Activated B cell treated with CpG ODN at 0.5 μM for 24 hours (primary cell): ENCODE measurements at regions of chr3 and their contacts with region 1.

Region 1: DNA sequence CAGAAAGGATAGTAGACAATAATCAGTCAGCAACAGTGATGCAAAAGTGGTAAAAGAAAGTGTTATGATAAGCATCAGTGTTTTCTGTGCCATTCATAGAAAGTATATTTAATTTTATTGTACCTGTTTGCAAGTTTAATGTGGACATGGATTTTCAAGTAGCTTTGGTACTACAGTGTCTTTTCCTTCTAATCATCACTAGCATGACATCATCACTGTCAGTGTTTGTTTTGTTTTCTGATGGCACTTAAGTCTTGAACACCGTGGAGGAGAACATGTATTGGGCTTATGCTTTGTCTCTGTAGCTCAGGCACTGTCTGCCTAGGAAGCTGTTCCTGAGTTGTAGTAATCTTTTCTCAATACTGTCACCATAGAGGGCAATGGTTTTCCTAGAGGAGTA is 41.9 kb downstream of the SETD5 start:
- DNase-seq: no peak
- ATAC-seq: no peak
- H3K4me3 Mint-ChIP-seq: no peak overlapping the region
- H3K27ac Mint-ChIP-seq: no peak overlapping the region
- H3K4me1 Mint-ChIP-seq: peaks cover 2% of the 10 kb centered on the region
- H3K27me3 Mint-ChIP-seq: no peaks in the 10 kb centered on the region
- CTCF ChIP-seq: no peak

Region 2: GRCh38 chr3:9452417-9452816 is 13.1 kb after region 1 on chr3:
- CTCF ChIA-PET with region 1: interaction called, 3 read pairs
- POLR2A ChIA-PET with region 1: no interaction called
- intact Hi-C with region 1: loop called (anchors 2 kb)
- DNase-seq: no peak
- ATAC-seq: no peak
- H3K4me3 Mint-ChIP-seq: no peak overlapping the region
- H3K27ac Mint-ChIP-seq: peak overlapping the region; percentile 32
- H3K4me1 Mint-ChIP-seq: peaks cover 7% of the 10 kb centered on the region
- H3K27me3 Mint-ChIP-seq: no peaks in the 10 kb centered on the region
- CTCF ChIP-seq: no peak

Region 3: GRCh38 chr3:9473496-9474065 is 34.2 kb after region 1 on chr3:
- CTCF ChIA-PET with region 1: no interaction called
- POLR2A ChIA-PET with region 1: no interaction called
- intact Hi-C with region 1: loop called (anchors 5 kb)
- DNase-seq: no peak
- ATAC-seq: no peak
- H3K4me3 Mint-ChIP-seq: no peak overlapping the region
- H3K27ac Mint-ChIP-seq: no peak overlapping the region
- H3K4me1 Mint-ChIP-seq: no peaks in the 10 kb centered on the region
- H3K27me3 Mint-ChIP-seq: no peaks in the 10 kb centered on the region
- CTCF ChIP-seq: no peak